ENCODE measurements at regions of chr1 and their contacts with region 1.

Region 1: GRCh38 chr1:205267306-205267902 is 39.7 kb downstream of the TMCC2 start:
- DNase-seq: no peak
- H3K4me3 ChIP-seq: no peak overlapping the region
- H3K27ac ChIP-seq: no peak overlapping the region
- H3K4me1 ChIP-seq: peaks cover 5% of the 10 kb centered on the region; the same call in 1 of the 2 replicates
- H3K27me3 ChIP-seq: no peaks in the 10 kb centered on the region
- CTCF ChIP-seq: no peak

Region 2: DNA sequence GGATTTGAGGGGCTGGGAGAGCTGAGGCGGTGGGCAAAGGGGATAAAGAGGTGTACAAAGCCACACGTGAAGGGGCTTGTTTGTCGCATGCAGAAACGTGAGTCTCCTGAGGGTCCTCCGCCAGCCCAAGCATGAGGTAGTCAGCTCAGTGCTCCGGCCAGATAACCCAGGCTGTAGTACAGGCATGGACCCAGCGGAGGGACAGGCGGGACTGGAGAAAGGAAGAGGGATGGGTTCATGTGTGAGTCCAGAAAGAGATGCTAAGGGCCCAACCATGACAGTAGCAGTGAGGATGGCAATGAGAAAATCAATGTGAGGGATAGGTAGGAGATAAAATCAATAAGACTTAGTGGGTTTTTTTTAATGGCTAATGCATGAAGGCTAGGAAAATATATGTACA is 378.1 kb after region 1 on chr1:
- CTCF ChIA-PET with region 1: no interaction called
- POLR2A ChIA-PET with region 1: interaction called, 11 read pairs
- intact Hi-C with region 1: no loop called
- DNase-seq: no peak
- H3K4me3 ChIP-seq: no peak overlapping the region
- H3K27ac ChIP-seq: no peak overlapping the region
- H3K4me1 ChIP-seq: no peaks in the 10 kb centered on the region
- H3K27me3 ChIP-seq: no peaks in the 10 kb centered on the region
- CTCF ChIP-seq: no peak

Measured in PC-9 (cell line).